CD8-positive, alpha-beta memory T cell (primary cell): ENCODE measurements at regions of chr10 and their contacts with region 1.

Region 1: GRCh38 chr10:26481914-26482550 is 43.9 kb downstream of the APBB1IP start:
- DNase-seq: peak in 3 of 5 donors; percentile 68 to 81 (median 71)
- H3K4me3 ChIP-seq: peak overlapping the region; percentile 23
- H3K4me3 Mint-ChIP-seq: peak overlapping the region; percentile 63 to 85 (median 75)
- H3K27ac ChIP-seq: peak overlapping the region; percentile 51
- H3K27ac Mint-ChIP-seq: peak overlapping the region; percentile 83 to 95 (median 88)
- H3K4me1 ChIP-seq: peaks cover 89% of the 10 kb centered on the region
- H3K4me1 Mint-ChIP-seq: peaks cover 75 to 90% (median 87%) of the 10 kb centered on the region in 3 donors
- H3K27me3 ChIP-seq: no peaks in the 10 kb centered on the region
- H3K27me3 Mint-ChIP-seq: no peaks in the 10 kb centered on the region

Region 2: DNA sequence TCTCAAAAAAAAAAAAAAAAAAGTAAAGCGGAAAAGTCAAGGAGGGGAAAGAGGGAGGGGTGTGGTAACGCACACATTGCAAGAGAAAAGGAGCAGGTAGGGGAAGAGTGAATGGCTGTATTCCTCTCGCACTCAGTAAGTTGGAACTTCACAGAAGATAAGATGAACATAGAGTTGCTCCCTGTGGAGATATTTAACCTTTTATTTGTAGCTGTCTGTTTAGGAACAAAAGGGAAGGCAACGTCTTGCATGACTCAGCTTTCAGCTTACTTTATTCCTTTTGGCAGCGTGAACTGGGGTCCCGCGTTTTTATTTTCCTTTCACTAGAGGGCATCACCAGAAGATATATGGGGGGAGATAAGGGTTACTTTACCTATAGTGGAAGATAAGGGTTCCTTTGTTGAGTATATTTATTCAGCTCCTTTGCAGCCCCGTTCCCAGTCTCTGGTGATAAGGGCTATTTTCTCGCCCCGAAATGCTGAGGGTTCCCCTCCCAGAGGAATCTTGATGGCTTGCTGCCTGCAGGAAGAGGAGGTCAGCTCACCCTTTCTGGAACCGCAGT is 34.6 kb after region 1 on chr10:
- CTCF ChIA-PET with region 1: no interaction called
- POLR2A ChIA-PET with region 1: interaction called, 12 read pairs
- DNase-seq: no peak
- H3K4me3 ChIP-seq: no peak overlapping the region
- H3K4me3 Mint-ChIP-seq: no peak overlapping the region
- H3K27ac ChIP-seq: no peak overlapping the region
- H3K27ac Mint-ChIP-seq: peak overlapping the region in 1 of 8 donors; percentile 64
- H3K4me1 ChIP-seq: no peaks in the 10 kb centered on the region
- H3K4me1 Mint-ChIP-seq: peaks cover 28 to 45% (median 43%) of the 10 kb centered on the region in 3 donors
- H3K27me3 ChIP-seq: no peaks in the 10 kb centered on the region
- H3K27me3 Mint-ChIP-seq: no peaks in the 10 kb centered on the region